GM10248 (cell line): ENCODE measurements at regions of chr2 and their contacts with region 1.

Region 1: DNA sequence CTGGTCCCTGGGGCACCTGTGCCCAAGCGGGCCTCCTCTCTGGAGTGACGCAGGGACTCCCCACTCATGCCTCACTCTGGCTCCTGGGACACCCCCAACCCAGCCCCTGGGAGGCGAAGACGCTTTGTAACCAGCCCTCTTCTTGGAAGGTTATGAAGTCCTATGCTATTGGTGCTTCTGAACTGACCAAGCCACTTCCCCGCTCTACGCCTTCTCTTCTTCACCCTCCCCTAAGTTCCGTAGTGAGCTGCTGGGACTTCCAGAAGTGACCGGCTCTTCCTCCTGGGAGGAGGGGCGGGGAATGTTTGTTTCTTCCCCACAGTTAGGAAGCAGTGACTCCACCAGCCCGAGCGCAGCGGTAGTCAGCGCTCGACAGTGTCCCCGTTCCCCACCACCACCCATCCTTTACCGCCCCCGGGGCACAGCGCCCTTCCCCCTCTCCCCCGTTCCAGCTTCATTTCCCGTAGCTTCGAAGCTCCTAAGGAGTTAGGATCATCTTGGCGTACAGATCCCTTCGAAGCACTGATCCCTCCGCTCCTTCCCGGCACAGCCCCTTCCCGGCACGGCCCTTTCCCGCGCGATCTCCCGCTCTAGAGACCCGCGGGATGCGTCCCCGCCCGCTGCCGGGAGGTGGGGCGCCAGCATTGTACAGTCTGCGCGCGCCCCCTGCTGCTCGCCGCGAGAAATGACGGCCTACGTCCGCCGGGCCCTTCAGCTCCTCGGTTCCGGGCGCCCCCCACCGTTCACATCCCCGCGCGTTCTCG is 25.3 kb upstream of the NOTO start:
- DNase-seq: peak; percentile 94
- CTCF ChIP-seq: peak; percentile 98

Region 2: DNA sequence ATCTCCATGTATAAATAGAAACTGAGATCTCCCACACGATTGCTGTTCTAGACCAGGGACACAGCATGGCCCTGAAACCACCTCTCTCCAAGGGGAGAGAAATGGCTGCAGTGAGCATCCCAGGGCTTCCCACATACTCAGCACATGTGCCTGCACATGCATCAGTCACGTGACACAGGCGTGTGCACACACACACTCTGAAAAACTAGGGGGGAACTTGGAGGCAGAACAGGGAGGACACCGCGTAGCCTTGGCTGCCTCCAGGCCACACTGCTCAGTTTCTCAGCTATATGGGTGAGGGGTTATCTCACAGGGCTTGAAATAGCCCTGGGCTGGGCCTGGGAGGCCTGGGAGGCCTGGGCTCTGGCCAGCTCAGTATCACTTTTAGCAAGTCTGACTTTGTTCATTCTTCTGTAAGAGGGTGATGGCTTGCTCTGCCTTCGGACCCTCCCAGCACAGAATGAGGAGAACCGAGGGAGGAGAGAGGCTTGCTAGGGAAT is 192.8 kb before region 1 on chr2:
- CTCF ChIA-PET with region 1: interaction called, 27 read pairs
- POLR2A ChIA-PET with region 1: no interaction called
- DNase-seq: no peak
- CTCF ChIP-seq: no peak

Region 3: GRCh38 chr2:73071360-73072133 is 105.5 kb before region 1 on chr2 and contains the start of gene SFXN5:
- CTCF ChIA-PET with region 1: interaction called, 27 read pairs
- POLR2A ChIA-PET with region 1: no interaction called
- DNase-seq: peak; percentile 99
- CTCF ChIP-seq: no peak

Region 4: DNA sequence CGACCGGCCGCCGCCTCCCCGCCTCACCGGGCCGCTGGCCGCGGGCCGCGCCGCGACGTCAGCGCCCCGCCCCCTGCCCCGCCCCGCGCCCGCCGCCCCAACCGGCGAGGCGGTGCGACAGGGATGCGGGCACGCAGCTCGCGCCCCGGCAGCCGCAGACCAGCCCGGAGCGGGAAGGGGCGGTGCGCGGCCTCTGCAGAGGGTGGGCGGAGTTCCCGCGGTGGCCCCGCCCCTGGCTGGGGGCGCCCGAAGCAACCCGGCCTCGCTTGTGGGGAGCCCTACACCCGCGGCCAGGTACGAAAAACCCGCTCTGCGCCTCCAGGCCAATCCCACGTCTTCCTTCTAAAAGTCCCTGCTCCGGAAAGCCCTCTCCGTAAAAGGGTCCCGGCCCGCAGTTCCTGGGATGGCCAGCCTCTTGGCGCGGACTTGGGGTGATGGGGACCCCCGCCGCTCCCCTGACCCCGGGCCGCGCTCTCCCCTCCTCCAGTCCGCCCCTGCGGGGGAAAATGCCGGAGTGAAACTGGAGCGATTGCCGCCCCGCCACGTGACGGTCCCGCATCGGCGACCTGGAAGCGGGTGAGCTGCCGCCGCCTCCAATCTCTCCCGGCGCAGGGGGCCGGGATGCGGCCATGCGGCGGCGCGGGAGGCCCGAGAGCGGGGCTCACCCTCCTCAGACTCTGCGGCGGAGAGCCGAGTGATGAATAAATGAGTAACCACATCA is 64.0 kb before region 1 on chr2 and contains the start of gene RAB11FIP5:
- CTCF ChIA-PET with region 1: interaction called, 19 read pairs
- POLR2A ChIA-PET with region 1: no interaction called
- DNase-seq: peak; percentile 77
- CTCF ChIP-seq: no peak

Region 5: GRCh38 chr2:73212448-73213176 is 35.5 kb after region 1 on chr2:
- CTCF ChIA-PET with region 1: interaction called, 82 read pairs
- POLR2A ChIA-PET with region 1: interaction called, 3 read pairs
- DNase-seq: peak; percentile 85
- CTCF ChIP-seq: peak; percentile 94